Motor neuron (in vitro differentiated cells): ENCODE measurements at regions of chr6 and their contacts with region 1.

Region 1: GRCh38 chr6:87832025-87832825 is 130.2 kb upstream of the AKIRIN2 start:
- ATAC-seq: peak; percentile 44 to 72 (median 66)
- H3K4me3 ChIP-seq: no peak overlapping the region
- H3K27ac ChIP-seq: peak overlapping the region in 1 of 2 donors; percentile 15
- H3K4me1 ChIP-seq: peaks cover 0 to 18% of the 10 kb centered on the region in 2 donors

Region 2: DNA sequence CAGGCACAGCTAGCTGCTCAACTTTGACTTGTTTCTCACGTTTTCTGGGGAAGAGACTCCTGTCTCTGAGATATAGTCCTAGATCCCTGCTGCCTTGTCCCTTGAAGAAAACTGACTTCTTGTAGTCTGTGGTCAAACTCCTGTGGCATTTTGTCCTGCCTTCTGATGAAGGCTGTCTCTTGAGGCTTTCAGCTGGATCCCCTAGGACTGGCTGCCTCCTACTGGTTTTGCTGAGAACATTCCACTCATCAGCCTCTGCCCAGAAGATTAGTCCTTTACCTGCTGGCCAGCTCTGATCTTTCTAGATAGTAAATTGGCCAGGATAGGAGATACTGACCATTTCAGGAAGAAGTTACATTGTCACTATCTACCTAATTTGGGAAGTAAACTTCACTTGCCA is 405.8 kb after region 1 on chr6:
- in situ Hi-C with region 1: loop called in 1 of 9 experiments (anchors 25 kb)
- ATAC-seq: peak in 3 of 8 experiments; percentile 67 to 77 (median 69)
- H3K4me3 ChIP-seq: no peak overlapping the region
- H3K27ac ChIP-seq: no peak overlapping the region
- H3K4me1 ChIP-seq: peaks cover 0 to 14% of the 10 kb centered on the region in 2 donors

Region 3: DNA sequence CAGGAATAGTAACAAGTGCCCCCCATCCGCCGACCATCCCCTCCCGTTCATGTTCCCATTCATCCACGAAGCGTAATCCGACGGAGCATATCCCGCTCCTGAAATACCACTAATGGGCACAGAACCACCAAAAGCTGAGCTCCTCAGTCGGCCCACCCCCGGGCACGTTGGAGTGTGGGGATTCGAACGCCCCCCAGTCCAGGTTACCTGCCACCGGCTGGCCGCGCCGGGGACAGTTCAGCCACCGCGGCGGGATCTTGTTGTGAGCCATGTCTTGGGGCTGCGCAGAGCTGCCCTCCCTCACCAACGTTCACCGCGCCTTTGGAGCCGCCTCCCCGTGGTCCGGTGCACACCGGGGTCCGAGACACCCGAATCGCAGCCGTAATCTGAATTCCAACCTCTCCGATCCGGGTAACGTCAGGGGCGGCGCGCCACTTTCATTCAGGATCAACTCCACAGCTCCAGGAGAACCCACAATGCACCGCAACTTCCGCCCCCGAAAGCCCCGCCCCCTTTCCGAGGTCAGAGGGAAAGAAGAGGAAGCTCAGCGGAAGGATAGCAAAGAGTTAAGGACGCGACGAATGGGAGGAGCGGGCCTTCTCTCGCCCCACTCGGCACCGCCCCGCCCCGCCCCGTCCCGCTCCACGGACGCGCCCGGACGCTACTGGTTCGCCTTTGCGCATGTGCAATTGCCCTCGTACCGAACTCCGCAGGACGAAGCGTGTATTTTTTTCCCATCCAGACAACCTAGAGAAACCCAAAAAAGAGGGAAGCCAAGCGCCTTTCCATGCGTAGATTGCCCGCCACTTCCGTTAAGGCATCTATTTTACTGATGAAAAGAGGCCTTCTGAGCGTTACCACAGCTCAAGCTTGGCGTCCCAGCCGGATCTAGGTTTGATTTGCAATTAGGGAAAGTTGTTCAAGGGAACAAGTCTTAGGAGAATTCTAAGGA is 1131.2 kb after region 1 on chr6 and contains the start of gene RNGTT:
- in situ Hi-C with region 1: no loop called
- ATAC-seq: peak; percentile 93 to 99 (median 99)
- H3K4me3 ChIP-seq: peak within 1 kb of the TSS; percentile 56 to 99 (median 66)
- H3K27ac ChIP-seq: peak within 1 kb of the TSS; percentile 70 to 80
- H3K4me1 ChIP-seq: peaks cover 4 to 8% of the 10 kb centered on the region in 2 donors
- total RNA-seq, gene RNGTT: 11.7 to 24.0 (median 18.4) TPM